ENCODE measurements at regions of chr1 and their contacts with region 1.

Region 1: DNA sequence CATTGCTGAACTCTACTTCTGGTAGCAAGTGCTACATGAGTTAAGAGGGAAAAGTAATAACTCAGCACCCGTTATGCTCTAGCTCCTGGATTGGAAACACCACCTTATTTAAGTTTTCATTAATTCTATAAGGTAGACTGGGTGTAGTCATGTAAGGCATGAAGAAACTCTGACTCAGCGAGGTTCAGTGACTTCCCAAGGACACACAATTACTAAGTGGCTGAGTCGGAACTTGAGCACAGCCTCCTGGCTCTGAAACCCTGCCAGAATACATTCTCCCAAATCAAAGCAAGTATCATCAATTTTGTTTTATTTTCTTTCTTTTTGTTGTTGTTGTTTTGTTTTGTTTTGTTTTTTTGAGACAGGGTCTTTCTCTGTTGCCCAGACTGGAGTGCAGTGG is 29.1 kb upstream of the SCCPDH start:
- DNase-seq: no peak
- ATAC-seq: no peak
- H3K4me3 ChIP-seq: no peak overlapping the region
- H3K27ac ChIP-seq: no peak overlapping the region
- H3K4me1 ChIP-seq: peaks cover 3% of the 10 kb centered on the region; the same call in 2 of the 3 replicates
- CTCF ChIP-seq: no peak
- EP300 ChIP-seq: no peak
- POLR2A ChIP-seq: no peak
- RAD21 ChIP-seq: no peak

Region 2: GRCh38 chr1:246709835-246710234 is 14.7 kb after region 1 on chr1:
- CTCF ChIA-PET with region 1: interaction called, 14 read pairs
- POLR2A ChIA-PET with region 1: no interaction called
- DNase-seq: no peak
- ATAC-seq: no peak
- H3K4me3 ChIP-seq: no peak overlapping the region
- H3K27ac ChIP-seq: no peak overlapping the region
- H3K4me1 ChIP-seq: peaks cover 8% of the 10 kb centered on the region; the same call in 2 of the 3 replicates
- CTCF ChIP-seq: no peak
- EP300 ChIP-seq: no peak
- POLR2A ChIP-seq: no peak
- RAD21 ChIP-seq: no peak